Panc1 (cell line): ENCODE measurements at regions of chr14 and their contacts with region 1.

Region 1: GRCh38 chr14:52552063-52552988 is at the starts of genes GPR137C and TXNDC16:
- DNase-seq: peak; percentile 95
- ATAC-seq: peak; percentile 96
- H3K4me3 ChIP-seq: peak within 1 kb of the TSS; percentile 62 to 92
- H3K27ac ChIP-seq: peak within 1 kb of the TSS; percentile 32
- H3K4me1 ChIP-seq: peaks cover 14% of the 10 kb centered on the region
- H3K27me3 ChIP-seq: no peaks in the 10 kb centered on the region; the same call in 1 of the 2 replicates
- CTCF ChIP-seq: no peak
- total RNA-seq, gene GPR137C: 2.7 TPM
- total RNA-seq, gene TXNDC16: 4.9 TPM

Region 2: DNA sequence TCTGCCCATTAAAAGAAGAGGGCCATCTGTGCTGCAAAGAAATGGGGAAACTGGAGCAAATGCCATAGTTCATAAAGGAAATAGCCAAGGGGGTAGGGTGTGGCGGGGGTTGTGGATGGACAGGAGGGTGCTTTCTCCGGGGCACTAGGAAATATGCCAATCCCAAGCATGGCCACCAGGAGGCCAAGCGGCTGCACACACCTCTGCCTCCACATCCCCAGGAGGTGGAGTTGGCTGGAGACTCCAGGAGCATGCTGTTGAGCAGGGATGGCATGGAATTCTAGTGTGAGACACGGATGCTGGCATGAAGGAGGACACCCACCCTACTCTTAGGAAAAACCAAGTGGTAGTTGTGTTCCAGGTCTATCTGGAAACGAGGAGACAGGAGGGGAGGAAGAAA is 508.6 kb before region 1 on chr14:
- CTCF ChIA-PET with region 1: interaction called, 10 read pairs
- POLR2A ChIA-PET with region 1: no interaction called
- in situ Hi-C with region 1: no loop called
- intact Hi-C with region 1: no loop called
- DNase-seq: no peak
- ATAC-seq: peak; percentile 90
- H3K4me3 ChIP-seq: no peak overlapping the region
- H3K27ac ChIP-seq: no peak overlapping the region
- H3K4me1 ChIP-seq: no peaks in the 10 kb centered on the region
- H3K27me3 ChIP-seq: no peaks in the 10 kb centered on the region
- CTCF ChIP-seq: peak; percentile 65

Region 3: GRCh38 chr14:52110441-52111086 is 441.8 kb before region 1 on chr14:
- CTCF ChIA-PET with region 1: no interaction called
- POLR2A ChIA-PET with region 1: no interaction called
- in situ Hi-C with region 1: no loop called
- intact Hi-C with region 1: no loop called
- DNase-seq: no peak
- ATAC-seq: no peak
- H3K4me3 ChIP-seq: no peak overlapping the region
- H3K27ac ChIP-seq: no peak overlapping the region
- H3K4me1 ChIP-seq: no peaks in the 10 kb centered on the region
- H3K27me3 ChIP-seq: no peaks in the 10 kb centered on the region
- CTCF ChIP-seq: no peak

Region 4: GRCh38 chr14:52538623-52539022 is 13.7 kb before region 1 on chr14:
- CTCF ChIA-PET with region 1: interaction called, 11 read pairs
- POLR2A ChIA-PET with region 1: interaction called, 7 read pairs
- in situ Hi-C with region 1: no loop called
- intact Hi-C with region 1: no loop called
- DNase-seq: no peak
- ATAC-seq: no peak
- H3K4me3 ChIP-seq: no peak overlapping the region
- H3K27ac ChIP-seq: no peak overlapping the region
- H3K4me1 ChIP-seq: no peaks in the 10 kb centered on the region
- H3K27me3 ChIP-seq: no peaks in the 10 kb centered on the region
- CTCF ChIP-seq: no peak